Caco-2 (cell line): ENCODE measurements at regions of chr1 and their contacts with region 1.

Region 1: GRCh38 chr1:231049121-231049979 is 9.3 kb upstream of the FAM89A start:
- DNase-seq: peak; percentile 59 to 64
- H3K4me3 ChIP-seq: no peak overlapping the region
- H3K4me3 Mint-ChIP-seq: peak overlapping the region; percentile 32
- H3K27ac Mint-ChIP-seq: peak overlapping the region; percentile 83
- H3K4me1 ChIP-seq: peaks cover 29% of the 10 kb centered on the region
- H3K4me1 Mint-ChIP-seq: peaks cover 46% of the 10 kb centered on the region
- H3K27me3 ChIP-seq: no peaks in the 10 kb centered on the region
- H3K27me3 Mint-ChIP-seq: no peaks in the 10 kb centered on the region
- CTCF ChIP-seq: no peak

Region 2: DNA sequence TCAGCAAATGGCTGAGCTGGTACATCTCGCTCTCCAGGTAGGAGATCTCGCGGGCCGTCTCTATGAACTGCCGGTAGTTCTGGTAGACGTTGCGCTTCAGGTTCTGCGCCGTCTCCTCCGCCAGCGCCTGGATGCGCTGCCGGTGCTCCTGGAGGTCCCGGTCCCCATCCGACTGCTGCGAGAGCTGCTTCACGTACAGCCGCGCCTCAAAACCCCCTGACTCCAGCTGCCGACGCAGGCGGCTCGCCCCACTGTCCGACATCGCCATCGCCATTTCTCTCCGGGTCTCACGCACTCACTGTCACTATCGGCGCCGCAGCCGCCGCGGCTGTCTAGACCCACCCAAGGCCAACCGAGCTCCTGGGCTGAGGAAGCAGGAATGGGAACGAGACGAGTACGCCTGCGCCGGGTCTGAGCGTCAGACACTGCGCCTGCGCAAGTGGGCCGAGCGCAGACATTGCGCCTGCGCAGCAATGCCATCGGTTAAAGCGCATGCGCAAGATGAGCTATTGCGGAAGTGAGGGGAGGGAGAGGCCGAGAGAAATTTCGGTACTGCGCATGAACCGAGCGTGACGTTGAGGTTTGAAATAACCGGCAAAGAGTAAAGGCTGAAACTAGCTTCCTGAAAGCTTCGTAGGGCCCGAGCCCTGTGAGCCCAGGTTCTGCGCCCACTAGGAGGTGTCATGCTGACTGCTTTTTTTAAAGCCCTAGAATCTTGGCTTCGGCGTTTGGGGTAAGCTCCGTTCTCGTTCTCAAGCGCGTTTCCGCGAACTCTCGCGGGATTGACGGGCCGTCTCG is 288.3 kb after region 1 on chr1 and contains the start of gene EXOC8:
- CTCF ChIA-PET with region 1: interaction called, 10 read pairs
- POLR2A ChIA-PET with region 1: no interaction called
- intact Hi-C with region 1: no loop called
- DNase-seq: peak; percentile 95 to 98
- H3K4me3 ChIP-seq: peak within 1 kb of the TSS; percentile 88
- H3K4me3 Mint-ChIP-seq: peak within 1 kb of the TSS; percentile 98
- H3K27ac Mint-ChIP-seq: peak within 1 kb of the TSS; percentile 98
- H3K4me1 ChIP-seq: peaks cover 6% of the 10 kb centered on the region
- H3K4me1 Mint-ChIP-seq: peaks cover 25% of the 10 kb centered on the region
- H3K27me3 ChIP-seq: no peaks in the 10 kb centered on the region
- H3K27me3 Mint-ChIP-seq: peaks cover 2% of the 10 kb centered on the region
- CTCF ChIP-seq: no peak
- total RNA-seq, gene EXOC8: 17.2 and 18.3 TPM in 2 replicates